ENCODE measurements at regions of chr6 and their contacts with region 1.

Region 1: GRCh38 chr6:34696739-34697543 is at the start of gene ILRUN:
- DNase-seq: peak; percentile 99
- ATAC-seq: peak; percentile 89
- H3K4me3 ChIP-seq: peak within 1 kb of the TSS; percentile 95 to 99 (median 98)
- H3K4me3 Mint-ChIP-seq: peak within 1 kb of the TSS; percentile 96
- H3K27ac ChIP-seq: peak within 1 kb of the TSS; percentile 95 to 96
- H3K27ac Mint-ChIP-seq: peak within 1 kb of the TSS; percentile 99
- H3K4me1 ChIP-seq: peaks cover 24 to 38% of the 10 kb centered on the region in 2 donors
- H3K4me1 Mint-ChIP-seq: peaks cover 43% of the 10 kb centered on the region
- H3K27me3 ChIP-seq: no peaks in the 10 kb centered on the region
- H3K27me3 Mint-ChIP-seq: no peaks in the 10 kb centered on the region
- CTCF ChIP-seq: no peak
- total RNA-seq, gene ILRUN: 71.3 and 76.4 TPM in 2 replicates

Region 2: DNA sequence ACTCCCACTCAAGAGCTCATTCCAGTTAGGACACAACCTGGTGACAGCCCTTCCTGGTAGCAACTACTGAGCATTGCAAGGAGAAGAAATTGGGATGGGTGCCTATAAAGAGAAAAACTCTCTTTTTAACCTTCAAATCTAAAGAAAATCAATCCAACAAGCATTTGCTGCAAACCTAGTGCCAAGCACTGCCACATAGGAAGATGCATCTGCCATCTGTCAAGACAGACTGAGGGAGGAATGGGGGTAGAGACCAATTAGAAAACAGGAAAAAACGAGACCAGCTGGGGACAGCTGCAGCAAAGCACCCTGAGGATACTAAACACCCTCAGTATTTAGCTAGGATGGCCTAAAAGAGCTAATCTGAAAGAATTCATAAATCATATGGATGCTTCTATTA is 1784.0 kb before region 1 on chr6:
- CTCF ChIA-PET with region 1: no interaction called
- POLR2A ChIA-PET with region 1: no interaction called
- intact Hi-C with region 1: no loop called
- DNase-seq: no peak
- ATAC-seq: no peak
- H3K4me3 ChIP-seq: no peak overlapping the region
- H3K4me3 Mint-ChIP-seq: no peak overlapping the region
- H3K27ac ChIP-seq: no peak overlapping the region
- H3K27ac Mint-ChIP-seq: no peak overlapping the region
- H3K4me1 ChIP-seq: peaks cover 7 to 22% of the 10 kb centered on the region in 2 donors
- H3K4me1 Mint-ChIP-seq: peaks cover 26% of the 10 kb centered on the region
- H3K27me3 ChIP-seq: no peaks in the 10 kb centered on the region
- H3K27me3 Mint-ChIP-seq: no peaks in the 10 kb centered on the region
- CTCF ChIP-seq: no peak

Region 3: DNA sequence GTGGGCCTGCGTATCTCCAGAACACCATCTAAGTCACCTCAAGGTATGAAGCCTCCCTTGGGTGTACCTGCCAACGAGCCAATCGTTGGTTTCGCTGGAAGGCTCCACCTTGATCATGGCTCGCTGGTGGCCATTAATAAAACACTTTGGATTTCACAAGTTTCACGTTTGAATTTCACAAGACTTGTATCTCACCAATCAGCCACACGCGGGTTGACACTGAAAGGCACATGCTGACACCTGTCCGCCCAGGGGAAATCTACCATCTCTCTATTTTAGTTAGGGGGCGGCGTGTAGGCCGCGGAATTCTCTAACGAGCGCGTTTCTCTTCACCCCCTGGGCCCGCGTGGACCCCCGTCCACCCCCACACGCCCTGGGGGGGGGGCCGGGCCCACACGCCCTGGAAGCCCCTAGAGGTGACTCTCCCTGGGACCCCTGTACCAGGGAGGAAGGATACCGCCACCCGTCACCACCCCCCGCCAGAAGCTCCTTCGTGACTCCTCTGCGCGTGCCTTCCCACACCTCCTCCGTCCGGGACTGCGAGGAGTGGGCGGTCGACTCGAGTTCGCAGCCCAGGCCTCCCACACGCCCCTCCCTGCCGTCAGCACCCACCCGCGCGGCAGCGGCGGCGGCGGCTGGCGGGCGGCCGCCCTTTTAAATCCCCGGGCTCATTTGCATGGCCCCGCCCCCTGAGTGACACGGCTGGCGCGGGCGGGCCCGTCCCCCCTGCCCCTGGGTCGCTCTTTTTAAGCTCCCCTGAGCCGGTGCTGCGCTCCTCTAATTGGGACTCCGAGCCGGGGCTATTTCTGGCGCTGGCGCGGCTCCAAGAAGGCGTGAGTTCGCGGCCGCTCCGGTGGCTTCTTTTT is 460.6 kb before region 1 on chr6 and contains the start of gene HMGA1:
- CTCF ChIA-PET with region 1: no interaction called
- POLR2A ChIA-PET with region 1: no interaction called
- intact Hi-C with region 1: loop called (anchors 10 kb)
- DNase-seq: peak; percentile 96
- ATAC-seq: peak; percentile 76
- H3K4me3 ChIP-seq: peak within 1 kb of the TSS; percentile 64 to 93 (median 88)
- H3K4me3 Mint-ChIP-seq: peak within 1 kb of the TSS; percentile 92
- H3K27ac ChIP-seq: peak within 1 kb of the TSS; percentile 96 to 98
- H3K27ac Mint-ChIP-seq: peak within 1 kb of the TSS; percentile 98
- H3K4me1 ChIP-seq: peaks cover 22 to 30% of the 10 kb centered on the region in 2 donors
- H3K4me1 Mint-ChIP-seq: peaks cover 34% of the 10 kb centered on the region
- H3K27me3 ChIP-seq: no peaks in the 10 kb centered on the region
- H3K27me3 Mint-ChIP-seq: no peaks in the 10 kb centered on the region
- CTCF ChIP-seq: no peak
- total RNA-seq, gene HMGA1: 66.4 and 72.3 TPM in 2 replicates

Region 4: DNA sequence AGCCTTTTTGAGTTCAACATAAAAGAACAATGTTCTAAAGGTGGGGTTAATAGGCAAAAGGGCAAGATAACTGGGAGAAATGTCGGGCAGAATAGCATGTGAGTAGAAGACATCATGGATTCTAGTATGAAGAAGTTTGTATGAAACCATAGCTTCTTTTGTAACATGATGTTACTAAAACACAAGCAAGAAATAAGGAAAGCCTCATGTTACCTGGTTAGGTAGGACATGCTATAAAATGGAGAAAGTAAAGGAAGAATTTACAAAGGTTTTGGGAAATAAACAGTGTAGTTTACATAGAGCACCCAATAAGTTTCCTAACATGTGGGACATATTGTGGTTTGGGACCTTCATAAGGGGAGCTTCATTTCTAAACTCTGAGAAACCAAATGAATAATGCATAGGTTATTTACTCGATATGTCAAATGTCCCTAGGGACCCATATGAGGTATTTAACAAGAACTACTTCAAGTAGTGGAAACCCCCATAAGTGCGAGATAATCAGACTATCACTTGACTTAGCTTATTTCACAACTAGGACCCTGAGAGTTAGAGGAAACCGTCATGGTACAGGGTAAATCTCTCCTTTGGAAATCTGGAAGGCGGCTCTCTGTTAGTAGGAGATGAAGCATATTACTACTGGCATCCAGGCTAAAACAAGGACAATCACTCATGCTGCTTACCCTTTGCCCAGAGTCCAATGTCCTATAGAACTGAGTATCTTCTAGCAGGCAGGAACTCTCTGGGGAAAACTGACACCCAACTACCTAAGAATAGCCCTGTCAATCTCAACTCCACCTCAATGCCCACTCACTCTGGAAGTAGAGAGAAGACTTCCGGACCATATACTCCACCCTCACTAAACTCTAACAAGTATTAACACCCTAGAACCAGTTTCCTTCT is 57.9 kb before region 1 on chr6:
- CTCF ChIA-PET with region 1: no interaction called
- POLR2A ChIA-PET with region 1: no interaction called
- intact Hi-C with region 1: loop called (anchors 2 kb)
- DNase-seq: peak; percentile 74
- ATAC-seq: peak; percentile 77
- H3K4me3 ChIP-seq: no peak overlapping the region
- H3K4me3 Mint-ChIP-seq: peak overlapping the region; percentile 79
- H3K27ac ChIP-seq: peak overlapping the region; percentile 61 to 86
- H3K27ac Mint-ChIP-seq: peak overlapping the region; percentile 70
- H3K4me1 ChIP-seq: peaks cover 17 to 21% of the 10 kb centered on the region in 2 donors
- H3K4me1 Mint-ChIP-seq: peaks cover 41% of the 10 kb centered on the region
- H3K27me3 ChIP-seq: no peaks in the 10 kb centered on the region
- H3K27me3 Mint-ChIP-seq: no peaks in the 10 kb centered on the region
- CTCF ChIP-seq: no peak

Region 5: GRCh38 chr6:34656378-34657036 is 40.4 kb before region 1 on chr6:
- CTCF ChIA-PET with region 1: no interaction called
- POLR2A ChIA-PET with region 1: interaction called, 6 read pairs
- intact Hi-C with region 1: loop called (anchors 5 kb)
- DNase-seq: peak; percentile 63
- ATAC-seq: peak; percentile 71
- H3K4me3 ChIP-seq: peak overlapping the region in 3 of 5 experiments; percentile 19 to 50 (median 23)
- H3K4me3 Mint-ChIP-seq: peak overlapping the region; percentile 80
- H3K27ac ChIP-seq: peak overlapping the region; percentile 78 to 84
- H3K27ac Mint-ChIP-seq: peak overlapping the region; percentile 88
- H3K4me1 ChIP-seq: peaks cover 34 to 40% of the 10 kb centered on the region in 2 donors
- H3K4me1 Mint-ChIP-seq: peaks cover 51% of the 10 kb centered on the region
- H3K27me3 ChIP-seq: no peaks in the 10 kb centered on the region
- H3K27me3 Mint-ChIP-seq: no peaks in the 10 kb centered on the region
- CTCF ChIP-seq: no peak

Region 6: DNA sequence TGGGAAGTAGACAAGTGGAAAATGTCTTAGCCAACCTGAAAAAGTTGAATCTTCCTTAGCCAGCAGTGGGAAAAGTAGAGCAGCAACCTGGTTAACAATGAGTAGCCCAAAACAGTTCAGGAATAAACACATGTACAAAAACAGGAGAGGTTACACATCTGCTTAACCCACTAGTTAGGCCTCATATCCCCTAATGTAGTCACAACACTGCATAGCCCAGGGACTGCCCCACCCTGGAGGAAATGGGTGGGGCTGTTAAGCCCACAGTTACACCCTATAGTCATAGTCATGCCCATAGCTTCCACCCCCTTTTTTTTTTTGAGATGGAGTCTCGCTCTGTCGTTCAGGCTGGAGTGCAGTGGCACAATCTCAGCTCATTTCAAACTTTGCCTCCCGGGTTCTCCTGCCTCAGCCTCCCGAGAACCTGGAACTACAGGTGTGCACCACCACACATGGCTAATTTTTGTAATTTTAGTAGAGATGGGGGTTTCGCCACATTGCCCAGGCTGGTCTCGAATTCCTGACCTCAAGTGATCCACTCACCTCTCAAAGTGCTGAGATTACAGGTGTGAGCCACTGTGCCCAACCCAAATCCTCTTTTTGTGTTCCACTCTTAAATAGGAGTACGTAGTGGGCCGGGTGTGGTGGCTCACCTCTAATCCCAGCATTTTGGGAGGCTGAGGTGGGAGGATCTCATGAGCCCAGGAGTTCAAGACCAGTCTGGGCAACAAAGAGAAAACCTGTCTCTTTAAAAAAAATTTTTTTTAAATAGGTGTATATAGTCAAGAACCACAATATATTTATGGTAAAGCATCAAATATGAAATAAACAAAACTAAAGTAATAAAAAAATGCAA is 24.9 kb before region 1 on chr6:
- CTCF ChIA-PET with region 1: interaction called, 3 read pairs
- POLR2A ChIA-PET with region 1: interaction called, 32 read pairs
- intact Hi-C with region 1: loop called (anchors 1 kb)
- DNase-seq: peak; percentile 90
- ATAC-seq: peak; percentile 94
- H3K4me3 ChIP-seq: peak overlapping the region; percentile 9 to 57 (median 39)
- H3K4me3 Mint-ChIP-seq: peak overlapping the region; percentile 88
- H3K27ac ChIP-seq: peak overlapping the region; percentile 96 to 98
- H3K27ac Mint-ChIP-seq: peak overlapping the region; percentile 98
- H3K4me1 ChIP-seq: peaks cover 60 to 69% of the 10 kb centered on the region in 2 donors
- H3K4me1 Mint-ChIP-seq: peaks cover 71% of the 10 kb centered on the region
- H3K27me3 ChIP-seq: no peaks in the 10 kb centered on the region
- H3K27me3 Mint-ChIP-seq: no peaks in the 10 kb centered on the region
- CTCF ChIP-seq: no peak

Region 7: DNA sequence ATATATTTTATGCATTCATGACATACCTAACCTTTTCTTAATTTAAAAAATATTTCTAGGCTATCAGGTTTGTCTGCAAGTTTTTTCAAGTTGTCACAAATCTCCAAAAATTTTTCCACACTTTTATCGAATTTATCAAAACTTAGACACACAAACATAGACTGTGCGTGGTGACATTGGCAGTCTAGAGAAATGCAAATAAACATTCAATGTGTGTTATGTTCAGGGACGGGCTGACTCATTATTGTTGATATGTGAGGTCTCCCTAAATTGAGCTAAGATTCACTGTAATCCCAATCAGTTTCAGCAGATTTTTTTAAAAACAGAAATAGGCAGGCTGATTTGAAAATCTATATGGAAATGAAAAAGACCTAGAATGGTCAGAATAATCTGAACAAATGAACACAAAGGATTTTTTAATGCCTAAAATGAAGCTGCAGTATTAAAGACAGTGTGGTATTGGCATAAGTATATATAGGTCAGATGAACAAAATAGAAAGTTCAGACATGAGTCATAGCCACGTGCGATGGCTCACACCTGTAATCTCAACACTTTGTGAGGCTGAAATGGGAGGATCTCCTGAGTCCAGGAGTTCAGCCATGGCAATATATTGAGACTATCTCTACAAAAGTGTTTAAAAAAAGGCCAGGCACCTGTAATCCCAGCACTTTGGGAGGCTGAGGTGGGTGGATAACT is 114.1 kb after region 1 on chr6:
- CTCF ChIA-PET with region 1: no interaction called
- POLR2A ChIA-PET with region 1: no interaction called
- intact Hi-C with region 1: no loop called
- DNase-seq: no peak
- ATAC-seq: peak; percentile 54
- H3K4me3 ChIP-seq: no peak overlapping the region
- H3K4me3 Mint-ChIP-seq: no peak overlapping the region
- H3K27ac ChIP-seq: no peak overlapping the region
- H3K27ac Mint-ChIP-seq: no peak overlapping the region
- H3K4me1 ChIP-seq: no peaks in the 10 kb centered on the region
- H3K4me1 Mint-ChIP-seq: peaks cover 19% of the 10 kb centered on the region
- H3K27me3 ChIP-seq: no peaks in the 10 kb centered on the region
- H3K27me3 Mint-ChIP-seq: no peaks in the 10 kb centered on the region
- CTCF ChIP-seq: no peak

Region 8: GRCh38 chr6:35064757-35065440 is 368.0 kb after region 1 on chr6:
- CTCF ChIA-PET with region 1: no interaction called
- POLR2A ChIA-PET with region 1: no interaction called
- intact Hi-C with region 1: no loop called
- DNase-seq: no peak
- ATAC-seq: no peak
- H3K4me3 ChIP-seq: no peak overlapping the region
- H3K4me3 Mint-ChIP-seq: no peak overlapping the region
- H3K27ac ChIP-seq: no peak overlapping the region
- H3K27ac Mint-ChIP-seq: no peak overlapping the region
- H3K4me1 ChIP-seq: no peaks in the 10 kb centered on the region
- H3K4me1 Mint-ChIP-seq: no peaks in the 10 kb centered on the region
- H3K27me3 ChIP-seq: no peaks in the 10 kb centered on the region
- H3K27me3 Mint-ChIP-seq: no peaks in the 10 kb centered on the region
- CTCF ChIP-seq: no peak